PC-3 (cell line): ENCODE measurements at regions of chr4 and their contacts with region 1.

Region 1: GRCh38 chr4:186725469-186726425 is 2.1 kb upstream of the FAT1 start:
- DNase-seq: peak; percentile 72
- ATAC-seq: peak; percentile 39
- H3K4me3 ChIP-seq: peak overlapping the region; percentile 96
- H3K27ac ChIP-seq: peak overlapping the region; percentile 90
- H3K4me1 ChIP-seq: peaks cover 29% of the 10 kb centered on the region
- H3K27me3 ChIP-seq: no peaks in the 10 kb centered on the region
- CTCF ChIP-seq: peak; percentile 81

Region 2: DNA sequence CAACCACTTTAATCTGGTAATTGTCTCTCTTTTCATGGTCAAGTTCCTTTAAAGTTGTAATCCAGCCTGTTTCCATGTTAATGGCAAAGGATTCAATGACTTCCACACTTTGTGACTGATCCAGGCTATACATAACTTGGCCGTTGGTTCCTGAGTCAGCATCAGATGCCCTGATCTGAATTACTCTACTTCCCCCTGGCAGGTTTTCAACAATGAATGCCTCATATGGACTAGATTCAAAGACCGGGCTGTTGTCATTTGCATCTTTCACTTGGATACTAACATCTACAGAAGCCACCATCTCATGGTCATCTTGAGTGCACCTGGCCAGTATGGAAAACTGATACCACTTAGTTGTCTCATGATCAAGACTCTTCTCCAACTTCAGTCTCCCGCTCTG is 107.8 kb before region 1 on chr4:
- CTCF ChIA-PET with region 1: no interaction called
- POLR2A ChIA-PET with region 1: no interaction called
- intact Hi-C with region 1: no loop called
- DNase-seq: no peak
- ATAC-seq: no peak
- H3K4me3 ChIP-seq: no peak overlapping the region
- H3K27ac ChIP-seq: no peak overlapping the region
- H3K4me1 ChIP-seq: no peaks in the 10 kb centered on the region
- H3K27me3 ChIP-seq: no peaks in the 10 kb centered on the region
- CTCF ChIP-seq: no peak

Region 3: GRCh38 chr4:186739802-186740434 is 14.2 kb after region 1 on chr4:
- CTCF ChIA-PET with region 1: interaction called, 12 read pairs
- POLR2A ChIA-PET with region 1: no interaction called
- intact Hi-C with region 1: no loop called
- DNase-seq: no peak
- ATAC-seq: no peak
- H3K4me3 ChIP-seq: no peak overlapping the region
- H3K27ac ChIP-seq: no peak overlapping the region
- H3K4me1 ChIP-seq: peaks cover 14% of the 10 kb centered on the region; the same call in 1 of the 2 replicates
- H3K27me3 ChIP-seq: no peaks in the 10 kb centered on the region
- CTCF ChIP-seq: no peak

Region 4: DNA sequence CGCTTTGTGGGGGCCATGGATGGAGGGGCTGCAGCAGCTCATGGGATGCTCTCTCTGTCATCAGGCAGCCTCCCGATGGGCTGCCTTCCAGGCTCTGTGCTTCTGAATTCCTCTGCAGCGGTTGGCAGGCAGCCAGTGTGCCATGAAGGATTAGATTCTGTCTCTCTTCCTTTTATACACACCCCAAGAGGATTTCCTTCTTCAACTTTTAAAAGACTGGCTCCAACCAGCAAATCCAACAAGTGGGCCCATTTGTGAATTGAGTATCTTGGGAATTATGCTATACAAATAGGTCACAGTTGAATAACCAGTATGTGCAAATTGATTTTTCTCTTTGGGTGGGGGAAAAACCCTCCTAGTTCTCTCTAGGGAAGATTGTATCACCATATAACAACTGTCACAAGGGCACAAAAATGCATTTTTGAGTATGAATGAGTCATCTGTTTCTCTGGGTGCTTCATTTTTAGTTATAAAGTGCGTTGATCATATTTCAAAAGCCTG is 94.7 kb after region 1 on chr4:
- CTCF ChIA-PET with region 1: no interaction called
- POLR2A ChIA-PET with region 1: no interaction called
- intact Hi-C with region 1: loop called (anchors 2 kb)
- DNase-seq: no peak
- ATAC-seq: no peak
- H3K4me3 ChIP-seq: no peak overlapping the region
- H3K27ac ChIP-seq: no peak overlapping the region
- H3K4me1 ChIP-seq: no peaks in the 10 kb centered on the region; the same call in 1 of the 2 replicates
- H3K27me3 ChIP-seq: no peaks in the 10 kb centered on the region
- CTCF ChIP-seq: no peak

Region 5: GRCh38 chr4:186936496-186937375 is 211.0 kb after region 1 on chr4:
- CTCF ChIA-PET with region 1: no interaction called
- POLR2A ChIA-PET with region 1: no interaction called
- intact Hi-C with region 1: loop called (anchors 1 kb)
- DNase-seq: peak; percentile 79
- ATAC-seq: peak; percentile 66
- H3K4me3 ChIP-seq: peak overlapping the region; percentile 54
- H3K27ac ChIP-seq: peak overlapping the region; percentile 92
- H3K4me1 ChIP-seq: peaks cover 47% of the 10 kb centered on the region
- H3K27me3 ChIP-seq: no peaks in the 10 kb centered on the region
- CTCF ChIP-seq: peak; percentile 48; the same call in 1 of the 2 replicates

Region 6: DNA sequence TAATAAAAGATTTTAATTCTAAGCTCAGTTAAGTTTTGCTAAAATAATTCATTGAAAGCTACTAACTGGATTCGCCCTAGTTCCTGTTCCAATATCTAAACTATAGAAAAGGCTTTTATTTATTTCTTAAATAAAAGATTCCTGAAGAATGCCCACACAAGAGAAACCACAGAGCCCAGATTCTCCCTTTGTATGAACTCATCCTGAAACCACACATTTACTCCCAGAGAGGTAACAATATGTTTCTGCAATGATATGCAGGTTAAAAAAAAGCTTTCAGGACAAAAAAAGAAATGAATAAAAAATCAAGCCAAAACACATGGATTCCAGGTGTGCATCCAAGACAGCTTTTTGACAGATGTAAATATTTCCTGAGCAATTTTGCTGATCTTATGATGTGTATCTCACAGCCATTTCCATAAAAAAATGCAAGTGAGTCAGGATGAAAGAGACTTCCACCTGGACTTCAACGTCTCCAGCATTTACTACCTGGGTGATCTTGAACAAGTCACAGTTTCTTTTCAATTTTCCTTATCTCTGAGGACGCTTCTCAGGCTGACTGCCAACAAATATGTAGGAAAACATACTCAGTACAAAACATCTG is 232.3 kb after region 1 on chr4:
- CTCF ChIA-PET with region 1: no interaction called
- POLR2A ChIA-PET with region 1: no interaction called
- intact Hi-C with region 1: no loop called
- DNase-seq: no peak
- ATAC-seq: no peak
- H3K4me3 ChIP-seq: no peak overlapping the region
- H3K27ac ChIP-seq: no peak overlapping the region
- H3K4me1 ChIP-seq: no peaks in the 10 kb centered on the region
- H3K27me3 ChIP-seq: no peaks in the 10 kb centered on the region
- CTCF ChIP-seq: no peak

Region 7: GRCh38 chr4:187258651-187259401 is 533.1 kb after region 1 on chr4:
- CTCF ChIA-PET with region 1: no interaction called
- POLR2A ChIA-PET with region 1: no interaction called
- intact Hi-C with region 1: loop called (anchors 1 kb)
- DNase-seq: no peak
- ATAC-seq: no peak
- H3K4me3 ChIP-seq: no peak overlapping the region
- H3K27ac ChIP-seq: no peak overlapping the region
- H3K4me1 ChIP-seq: peaks cover 9% of the 10 kb centered on the region
- H3K27me3 ChIP-seq: no peaks in the 10 kb centered on the region
- CTCF ChIP-seq: no peak

Region 8: DNA sequence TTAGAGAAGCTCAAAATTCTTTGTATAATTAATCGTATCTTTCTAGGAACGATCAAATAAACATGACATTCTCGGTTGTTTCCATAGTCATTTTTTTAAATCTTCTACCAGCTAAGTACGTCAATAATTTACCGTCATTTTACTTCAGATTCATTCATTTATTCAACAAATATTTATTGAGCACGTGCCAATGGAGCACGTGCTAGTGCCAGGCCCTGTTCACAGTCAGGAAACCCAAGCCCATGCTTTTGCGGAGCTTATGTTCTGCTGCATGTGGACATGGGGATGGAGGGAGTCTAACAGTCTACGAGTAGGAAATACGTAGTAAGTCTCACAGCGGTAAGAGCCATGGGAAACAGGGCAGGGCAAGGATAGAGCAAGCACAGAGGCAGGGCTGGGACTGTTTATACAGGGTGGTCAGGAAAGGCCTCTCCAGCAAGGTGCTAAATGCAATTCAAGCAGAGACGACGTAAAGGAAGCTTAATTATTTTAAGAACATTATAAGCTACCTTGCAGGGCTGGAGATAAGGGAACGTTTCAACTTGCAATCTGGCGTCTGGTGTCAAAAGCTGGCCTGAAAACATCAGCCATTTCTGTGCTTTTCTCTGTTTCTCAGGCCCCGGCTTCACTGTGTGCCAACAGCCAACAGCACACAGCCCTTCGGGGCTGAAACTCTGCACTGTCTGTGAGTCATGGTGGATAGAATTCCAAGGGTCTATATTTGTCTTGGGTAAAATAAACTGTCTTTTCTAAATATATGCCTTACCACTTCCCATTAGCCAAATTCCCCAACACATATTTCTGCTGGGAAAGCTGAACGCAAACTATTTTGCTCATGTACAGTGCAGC is 752.8 kb after region 1 on chr4:
- CTCF ChIA-PET with region 1: no interaction called
- POLR2A ChIA-PET with region 1: no interaction called
- intact Hi-C with region 1: loop called (anchors 1 kb)
- DNase-seq: peak; percentile 82
- ATAC-seq: peak; percentile 75
- H3K4me3 ChIP-seq: peak overlapping the region; percentile 5; the same call in 1 of the 2 replicates
- H3K27ac ChIP-seq: peak overlapping the region; percentile 96
- H3K4me1 ChIP-seq: peaks cover 36% of the 10 kb centered on the region
- H3K27me3 ChIP-seq: no peaks in the 10 kb centered on the region
- CTCF ChIP-seq: no peak